ENCODE measurements at regions of chr2 and their contacts with region 1.

Region 1: DNA sequence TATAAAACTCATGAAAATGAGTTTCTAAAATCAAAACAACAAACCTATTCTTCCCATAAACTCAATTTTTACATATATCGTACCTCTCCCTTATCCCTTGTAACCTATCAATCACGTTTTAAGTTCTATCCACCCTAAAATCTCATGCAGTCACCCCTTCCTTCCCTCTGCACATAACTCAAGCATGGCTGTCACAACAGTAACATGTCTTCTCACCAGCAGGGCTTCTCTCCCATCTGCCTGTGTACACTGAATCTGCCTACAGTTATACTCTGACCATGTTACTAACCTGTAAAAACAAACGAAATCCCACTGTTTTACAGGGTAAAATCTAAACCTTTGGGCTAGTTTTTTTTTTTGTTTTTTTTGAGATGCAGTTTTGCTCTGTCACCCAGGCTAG is 68.2 kb downstream of the MAP4K3 start:
- DNase-seq: no peak
- H3K4me3 Mint-ChIP-seq: no peak overlapping the region
- H3K27ac Mint-ChIP-seq: no peak overlapping the region
- H3K4me1 Mint-ChIP-seq: peaks cover 6% of the 10 kb centered on the region
- H3K27me3 Mint-ChIP-seq: no peaks in the 10 kb centered on the region

Region 2: DNA sequence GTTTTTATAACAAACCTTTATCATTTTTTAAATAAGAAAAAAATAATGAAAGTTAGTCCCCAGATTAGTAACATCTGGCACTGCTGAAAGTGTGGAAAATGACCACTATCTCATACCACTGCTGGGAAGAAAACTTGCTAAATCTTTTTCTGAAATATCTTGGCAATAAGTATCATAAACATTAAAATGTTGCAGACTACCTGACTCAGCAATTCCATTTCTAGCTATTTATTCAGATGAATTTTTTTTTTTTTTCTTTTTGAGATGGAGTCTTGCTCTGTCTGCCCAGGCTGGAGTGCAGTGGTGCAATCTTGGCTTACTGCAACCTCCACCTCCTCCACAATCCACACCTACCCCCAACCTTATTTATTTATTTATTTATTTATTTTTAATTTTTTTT is 212.7 kb before region 1 on chr2:
- CTCF ChIA-PET with region 1: no interaction called
- DNase-seq: no peak
- H3K4me3 Mint-ChIP-seq: no peak overlapping the region
- H3K27ac Mint-ChIP-seq: no peak overlapping the region
- H3K4me1 Mint-ChIP-seq: peaks cover 2% of the 10 kb centered on the region
- H3K27me3 Mint-ChIP-seq: no peaks in the 10 kb centered on the region

Region 3: GRCh38 chr2:39289609-39290008 is 79.2 kb before region 1 on chr2:
- CTCF ChIA-PET with region 1: no interaction called
- DNase-seq: no peak
- H3K4me3 Mint-ChIP-seq: no peak overlapping the region
- H3K27ac Mint-ChIP-seq: no peak overlapping the region
- H3K4me1 Mint-ChIP-seq: no peaks in the 10 kb centered on the region
- H3K27me3 Mint-ChIP-seq: no peaks in the 10 kb centered on the region

Region 4: DNA sequence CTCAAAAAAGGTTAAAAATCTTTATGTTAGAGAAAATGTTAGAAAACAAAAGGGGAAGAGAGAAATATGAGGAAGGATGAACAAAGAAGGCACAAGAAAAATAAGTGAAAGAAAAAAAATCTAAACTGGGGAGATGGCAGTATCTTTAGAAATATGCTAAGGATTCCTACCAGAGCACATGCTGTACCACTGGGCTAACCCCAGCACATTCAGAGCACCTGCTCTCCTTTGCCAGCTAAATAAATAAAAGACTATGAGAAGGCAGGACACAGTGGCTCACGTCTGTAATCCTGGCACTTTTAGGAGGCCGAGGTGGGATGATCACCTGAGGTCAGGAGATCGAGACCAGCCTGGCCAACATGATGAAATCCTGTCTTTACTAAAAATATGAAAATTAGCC is 32.9 kb before region 1 on chr2:
- CTCF ChIA-PET with region 1: no interaction called
- DNase-seq: no peak
- H3K4me3 Mint-ChIP-seq: no peak overlapping the region
- H3K27ac Mint-ChIP-seq: no peak overlapping the region
- H3K4me1 Mint-ChIP-seq: no peaks in the 10 kb centered on the region
- H3K27me3 Mint-ChIP-seq: no peaks in the 10 kb centered on the region

Region 5: GRCh38 chr2:39379643-39380524 is 11.0 kb after region 1 on chr2:
- CTCF ChIA-PET with region 1: interaction called, 15 read pairs
- DNase-seq: no peak
- H3K4me3 Mint-ChIP-seq: no peak overlapping the region
- H3K27ac Mint-ChIP-seq: no peak overlapping the region
- H3K4me1 Mint-ChIP-seq: peaks cover 8% of the 10 kb centered on the region
- H3K27me3 Mint-ChIP-seq: no peaks in the 10 kb centered on the region

Region 6: GRCh38 chr2:39390216-39390615 is 21.4 kb after region 1 on chr2:
- CTCF ChIA-PET with region 1: no interaction called
- DNase-seq: no peak
- H3K4me3 Mint-ChIP-seq: no peak overlapping the region
- H3K27ac Mint-ChIP-seq: no peak overlapping the region
- H3K4me1 Mint-ChIP-seq: no peaks in the 10 kb centered on the region
- H3K27me3 Mint-ChIP-seq: no peaks in the 10 kb centered on the region

Measured in activated naive CD4-positive, alpha-beta T cell treated with anti-CD3 and anti-CD28 coated beads, Interleukin-2, amount 10 ng/mL, durations not matched to agents 7 days and 5 days (primary cell).